Activated T-helper 2 cell treated with anti-CD3 and anti-CD28 coated beads, Interferon-gamma antibody, Interleukin-2, Interleukin-4, amounts not matched to agents 10 μg/mL and 5 μg/mL and 100 μg/mL, durations not matched to agents 14 hours and 24 hours and 36 hours (primary cell): ENCODE measurements at regions of chr11 and their contacts with region 1.

Region 1: GRCh38 chr11:112541140-112541901 is 280.7 kb upstream of the PLET1 start:
- DNase-seq: no peak
- H3K4me3 Mint-ChIP-seq: no peak overlapping the region
- H3K27ac Mint-ChIP-seq: no peak overlapping the region
- H3K4me1 Mint-ChIP-seq: peaks cover 9% of the 10 kb centered on the region
- H3K27me3 Mint-ChIP-seq: peaks cover 5% of the 10 kb centered on the region

Region 2: DNA sequence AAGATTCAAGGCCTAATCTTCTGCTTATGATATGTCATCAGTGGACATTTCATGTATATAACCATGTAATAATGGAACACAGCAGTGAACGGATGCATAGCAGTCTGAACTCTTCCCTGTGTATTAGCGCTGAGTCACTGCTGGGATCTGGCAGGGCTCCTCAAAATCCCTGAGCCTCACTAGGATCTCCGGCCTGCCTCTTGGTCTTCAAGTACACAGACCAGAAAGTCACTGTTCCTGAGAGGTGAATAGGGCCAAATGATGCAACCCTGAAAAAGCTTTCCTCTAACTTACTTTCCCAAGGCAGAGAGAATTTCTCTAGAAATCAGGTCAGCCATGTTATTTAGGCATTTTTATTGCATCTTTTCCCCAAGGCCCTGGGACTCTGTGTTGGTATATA is 1197.3 kb before region 1 on chr11:
- intact Hi-C with region 1: loop called (anchors 10 kb)
- DNase-seq: no peak
- H3K4me3 Mint-ChIP-seq: no peak overlapping the region
- H3K27ac Mint-ChIP-seq: no peak overlapping the region
- H3K4me1 Mint-ChIP-seq: no peaks in the 10 kb centered on the region
- H3K27me3 Mint-ChIP-seq: peaks cover 3% of the 10 kb centered on the region